Activated CD4-positive, alpha-beta T cell treated with anti-CD3 and anti-CD28 coated beads for 36 hours (primary cell): ENCODE measurements at regions of chr7 and their contacts with region 1.

Region 1: GRCh38 chr7:158704704-158705468 is at the start of gene NCAPG2:
- DNase-seq: peak; percentile 99
- ATAC-seq: peak; percentile 98
- H3K4me3 Mint-ChIP-seq: peak within 1 kb of the TSS; percentile 85
- H3K27ac Mint-ChIP-seq: peak within 1 kb of the TSS; percentile 81
- H3K4me1 Mint-ChIP-seq: peaks cover 44% of the 10 kb centered on the region
- H3K27me3 Mint-ChIP-seq: no peaks in the 10 kb centered on the region
- total RNA-seq, gene NCAPG2: 85.4 to 127 TPM

Region 2: DNA sequence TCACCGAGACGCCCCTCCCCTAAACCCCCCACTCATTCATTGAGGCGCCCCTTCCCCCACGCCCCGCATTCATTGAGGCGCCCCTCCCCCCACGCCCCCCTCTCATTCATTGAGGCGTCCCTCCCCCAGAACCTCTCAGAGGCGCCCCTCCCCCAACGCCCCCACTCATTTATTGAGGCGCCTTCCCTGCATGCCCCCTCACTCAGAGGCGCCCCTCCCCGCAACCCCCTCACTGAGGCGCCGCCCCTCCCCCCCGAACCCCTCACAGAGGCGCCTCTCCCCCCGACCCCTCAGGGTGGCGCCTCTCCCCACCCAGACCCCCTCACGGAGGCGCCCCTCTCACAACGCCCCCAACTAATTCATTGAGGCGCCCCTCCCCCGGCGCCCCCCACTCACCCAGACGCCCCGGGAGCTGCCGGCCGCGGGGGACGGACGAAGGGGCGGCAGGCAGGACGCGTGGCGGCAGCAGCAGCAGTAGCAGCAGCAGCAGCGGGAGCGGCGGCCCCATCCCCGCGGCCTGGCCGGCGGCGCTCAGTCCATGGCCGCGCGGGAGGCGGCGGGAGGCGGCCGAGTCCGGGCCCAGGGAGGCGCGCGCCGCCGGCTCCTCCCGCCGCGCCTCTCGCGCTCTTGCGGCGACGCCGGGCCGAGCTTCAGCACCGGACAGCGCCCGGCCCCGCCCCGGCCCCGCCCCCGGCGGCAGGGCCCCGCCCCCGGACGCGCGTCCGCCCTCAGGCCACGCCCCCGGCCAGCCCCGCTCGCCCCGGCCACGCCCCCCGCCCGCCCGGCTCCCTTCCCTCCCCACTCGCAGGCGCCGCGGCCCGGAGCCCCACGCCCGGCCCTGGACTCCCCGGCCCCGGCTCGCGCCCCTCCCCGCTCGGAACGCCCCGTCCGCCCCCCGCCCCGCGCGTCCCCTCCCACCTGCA is 117.5 kb before region 1 on chr7 and contains the start of gene PTPRN2:
- CTCF ChIA-PET with region 1: no interaction called
- POLR2A ChIA-PET with region 1: no interaction called
- intact Hi-C with region 1: loop called in 1 of 2 experiments (anchors 1 kb)
- DNase-seq: peak; percentile 83
- ATAC-seq: peak; percentile 87
- H3K4me3 Mint-ChIP-seq: peak within 1 kb of the TSS; percentile 38
- H3K27ac Mint-ChIP-seq: no peak within 1 kb of the TSS
- H3K4me1 Mint-ChIP-seq: peaks cover 4% of the 10 kb centered on the region
- H3K27me3 Mint-ChIP-seq: peaks cover 44% of the 10 kb centered on the region
- total RNA-seq, gene PTPRN2: 0.46 to 0.51 TPM

Region 3: GRCh38 chr7:158638001-158638400 is 66.9 kb before region 1 on chr7:
- CTCF ChIA-PET with region 1: no interaction called
- POLR2A ChIA-PET with region 1: no interaction called
- intact Hi-C with region 1: no loop called
- DNase-seq: no peak
- ATAC-seq: no peak
- H3K4me3 Mint-ChIP-seq: no peak overlapping the region
- H3K27ac Mint-ChIP-seq: no peak overlapping the region
- H3K4me1 Mint-ChIP-seq: no peaks in the 10 kb centered on the region
- H3K27me3 Mint-ChIP-seq: no peaks in the 10 kb centered on the region

Region 4: DNA sequence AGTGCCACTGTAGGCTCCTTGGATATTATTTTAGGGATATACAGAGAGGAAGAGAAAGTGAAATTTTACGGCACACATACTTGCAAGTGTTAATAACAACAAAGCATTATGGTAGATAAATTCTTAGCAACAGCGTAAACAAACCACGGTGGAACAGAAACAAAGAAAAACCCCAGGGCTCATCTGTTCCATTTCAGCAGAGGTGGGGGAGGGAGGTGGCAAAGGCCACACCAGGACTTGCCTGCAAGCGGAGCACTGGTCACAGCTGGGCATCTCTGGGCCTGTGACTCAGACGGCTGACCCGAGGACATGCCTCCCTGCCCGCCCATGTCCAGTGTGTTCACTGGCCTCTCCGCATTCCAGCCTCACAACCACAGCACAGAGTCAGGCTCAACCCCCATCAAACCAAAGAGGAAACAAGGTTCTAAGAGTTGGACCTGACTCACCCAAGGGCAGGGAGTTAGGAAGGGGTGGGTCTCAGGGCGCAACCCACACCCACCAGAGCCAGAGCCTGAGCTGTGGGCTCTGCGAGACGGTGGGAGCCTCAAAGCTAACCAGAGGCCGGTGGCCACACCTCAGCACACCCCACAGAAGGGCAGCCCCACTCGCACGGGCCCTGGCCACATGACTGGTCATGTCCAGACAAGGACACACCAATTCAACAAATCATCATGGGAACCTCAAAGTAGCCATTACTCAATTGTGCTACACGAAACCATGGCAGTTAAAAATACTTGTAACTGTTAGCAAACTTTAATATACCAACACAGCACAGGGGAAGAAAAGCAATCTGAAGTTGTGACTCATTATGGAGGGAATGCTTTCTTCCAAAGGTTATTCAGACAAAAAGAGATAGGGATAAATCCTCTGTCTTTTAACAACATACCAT is 113.7 kb after region 1 on chr7:
- CTCF ChIA-PET with region 1: interaction called, 3 read pairs
- POLR2A ChIA-PET with region 1: no interaction called
- intact Hi-C with region 1: loop called in 1 of 2 experiments (anchors 5 kb)
- DNase-seq: peak; percentile 85
- ATAC-seq: peak; percentile 74
- H3K4me3 Mint-ChIP-seq: peak overlapping the region; percentile 73
- H3K27ac Mint-ChIP-seq: peak overlapping the region; percentile 93
- H3K4me1 Mint-ChIP-seq: peaks cover 87% of the 10 kb centered on the region
- H3K27me3 Mint-ChIP-seq: no peaks in the 10 kb centered on the region

Region 5: DNA sequence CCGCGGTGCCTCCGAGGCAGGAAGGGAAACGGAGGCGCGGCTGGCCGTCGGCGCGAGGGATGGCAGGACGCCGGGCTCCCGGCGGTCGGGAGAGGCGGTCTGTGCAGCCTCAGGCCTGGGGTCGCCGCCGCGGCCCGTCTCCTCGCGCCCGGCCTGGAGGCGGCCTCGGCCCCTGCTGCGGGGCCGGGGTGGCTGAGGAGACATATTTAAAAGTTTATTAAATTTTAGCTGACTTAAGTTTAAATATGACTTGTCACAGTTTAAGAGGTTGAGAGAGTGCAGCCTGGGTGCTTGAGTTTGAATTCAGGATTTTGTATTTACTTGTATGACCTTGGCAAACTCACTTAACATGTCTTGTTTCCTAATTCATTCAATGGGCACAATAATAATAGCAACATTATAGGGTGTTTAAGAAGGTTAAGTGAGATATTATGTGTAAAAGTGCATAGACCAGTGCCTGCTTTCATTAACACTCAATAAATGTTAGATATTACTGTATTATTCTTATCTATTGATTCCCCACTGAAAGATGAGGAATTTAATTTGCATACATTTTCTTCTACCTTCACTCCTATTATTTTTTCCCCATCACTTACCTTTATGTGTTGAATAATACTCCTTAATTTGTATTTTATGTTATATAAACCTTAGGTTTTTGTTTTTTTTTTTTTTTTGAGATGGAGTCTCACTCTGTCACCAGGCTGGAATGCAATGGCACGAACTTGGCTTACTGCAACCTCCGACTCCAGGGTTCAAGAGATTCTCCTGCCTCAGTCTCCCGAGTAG is 152.2 kb after region 1 on chr7:
- CTCF ChIA-PET with region 1: interaction called, 3 read pairs
- POLR2A ChIA-PET with region 1: no interaction called
- intact Hi-C with region 1: loop called (anchors 1 to 2 kb)
- DNase-seq: no peak
- ATAC-seq: no peak
- H3K4me3 Mint-ChIP-seq: peak overlapping the region; percentile 92
- H3K27ac Mint-ChIP-seq: no peak overlapping the region
- H3K4me1 Mint-ChIP-seq: peaks cover 26% of the 10 kb centered on the region
- H3K27me3 Mint-ChIP-seq: no peaks in the 10 kb centered on the region

Region 6: GRCh38 chr7:159211540-159212182 is 506.8 kb after region 1 on chr7:
- CTCF ChIA-PET with region 1: no interaction called
- POLR2A ChIA-PET with region 1: no interaction called
- intact Hi-C with region 1: no loop called
- DNase-seq: no peak
- ATAC-seq: no peak
- H3K4me3 Mint-ChIP-seq: no peak overlapping the region
- H3K27ac Mint-ChIP-seq: no peak overlapping the region
- H3K4me1 Mint-ChIP-seq: peaks cover 3% of the 10 kb centered on the region
- H3K27me3 Mint-ChIP-seq: no peaks in the 10 kb centered on the region